ENCODE measurements at regions of chr11 and their contacts with region 1.

Region 1: GRCh38 chr11:35173011-35173511 is 34.1 kb downstream of the CD44 start:
- DNase-seq: peak; percentile 91 to 93
- H3K4me3 ChIP-seq: no peak overlapping the region
- H3K4me3 Mint-ChIP-seq: no peak overlapping the region
- H3K27ac Mint-ChIP-seq: peak overlapping the region; percentile 59
- H3K4me1 ChIP-seq: peaks cover 46% of the 10 kb centered on the region
- H3K4me1 Mint-ChIP-seq: peaks cover 16% of the 10 kb centered on the region
- H3K27me3 ChIP-seq: no peaks in the 10 kb centered on the region
- H3K27me3 Mint-ChIP-seq: no peaks in the 10 kb centered on the region
- CTCF ChIP-seq: no peak

Region 2: GRCh38 chr11:35192347-35192746 is 19.3 kb after region 1 on chr11:
- CTCF ChIA-PET with region 1: no interaction called
- POLR2A ChIA-PET with region 1: interaction called, 6 read pairs
- intact Hi-C with region 1: loop called (anchors 1 kb)
- DNase-seq: peak; percentile 59 to 73
- H3K4me3 ChIP-seq: no peak overlapping the region
- H3K4me3 Mint-ChIP-seq: no peak overlapping the region
- H3K27ac Mint-ChIP-seq: peak overlapping the region; percentile 48
- H3K4me1 ChIP-seq: peaks cover 38% of the 10 kb centered on the region
- H3K4me1 Mint-ChIP-seq: peaks cover 12% of the 10 kb centered on the region
- H3K27me3 ChIP-seq: no peaks in the 10 kb centered on the region
- H3K27me3 Mint-ChIP-seq: no peaks in the 10 kb centered on the region
- CTCF ChIP-seq: no peak

Region 3: GRCh38 chr11:35237860-35238715 is 65.0 kb after region 1 on chr11:
- CTCF ChIA-PET with region 1: no interaction called
- POLR2A ChIA-PET with region 1: no interaction called
- intact Hi-C with region 1: loop called (anchors 1 kb)
- DNase-seq: peak; percentile 51 to 71
- H3K4me3 ChIP-seq: no peak overlapping the region
- H3K4me3 Mint-ChIP-seq: no peak overlapping the region
- H3K27ac Mint-ChIP-seq: peak overlapping the region; percentile 11
- H3K4me1 ChIP-seq: peaks cover 4% of the 10 kb centered on the region; the same call in 1 of the 2 replicates
- H3K4me1 Mint-ChIP-seq: peaks cover 8% of the 10 kb centered on the region
- H3K27me3 ChIP-seq: no peaks in the 10 kb centered on the region
- H3K27me3 Mint-ChIP-seq: no peaks in the 10 kb centered on the region
- CTCF ChIP-seq: peak; percentile 72 to 85

Measured in Caco-2 (cell line).